ENCODE measurements at regions of chr19 and their contacts with region 1.

Region 1: GRCh38 chr19:4896372-4896771 is 6.3 kb downstream of the ARRDC5 start:
- DNase-seq: peak; percentile 44
- H3K4me3 ChIP-seq: no peak overlapping the region
- H3K27ac ChIP-seq: no peak overlapping the region
- H3K4me1 ChIP-seq: peaks cover 11% of the 10 kb centered on the region
- H3K27me3 ChIP-seq: no peaks in the 10 kb centered on the region
- CTCF ChIP-seq: no peak

Region 2: DNA sequence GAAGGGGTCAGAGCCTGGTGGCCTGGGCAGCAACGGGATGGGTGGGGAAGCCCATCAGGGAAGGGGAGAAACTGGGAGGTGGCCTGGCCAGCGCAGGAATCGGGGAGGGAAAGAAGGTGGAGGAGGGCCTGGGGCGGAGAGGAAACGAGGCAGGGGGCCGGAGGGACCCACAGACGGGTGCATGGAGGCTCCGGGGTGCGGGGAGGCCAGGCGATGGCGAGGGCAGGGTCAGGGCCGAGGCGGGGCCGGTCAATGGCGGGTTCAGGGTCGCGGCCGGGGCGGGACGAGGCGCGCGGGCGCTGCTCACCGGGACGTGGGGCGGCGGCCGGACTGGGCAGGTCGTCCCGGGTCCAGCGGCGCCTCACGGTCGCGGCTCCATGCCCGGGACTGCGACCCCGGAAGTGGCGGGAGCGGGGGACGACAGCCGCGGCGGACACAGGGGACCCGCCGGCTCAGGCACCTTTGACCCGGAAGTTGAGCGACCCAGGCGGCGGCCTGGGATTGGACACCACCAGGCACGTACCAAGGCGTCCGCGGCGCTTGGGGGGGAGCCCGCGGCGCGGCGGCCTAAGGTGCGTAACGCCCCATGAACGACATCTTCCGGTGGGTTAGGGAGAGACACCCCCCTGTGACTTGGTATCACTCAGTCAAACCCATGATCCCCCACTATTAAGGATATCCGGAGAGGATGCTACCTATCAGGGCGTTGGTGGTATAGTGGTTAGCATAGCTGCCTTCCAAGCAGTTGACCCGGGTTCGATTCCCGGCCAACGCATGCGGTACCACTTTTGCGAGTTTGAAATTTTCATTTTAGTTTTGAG is 172.8 kb before region 1 on chr19 and contains the start of gene DPP9:
- CTCF ChIA-PET with region 1: no interaction called
- dilution Hi-C with region 1: no loop called
- in situ Hi-C with region 1: no loop called
- intact Hi-C with region 1: no loop called
- DNase-seq: peak; percentile 98
- H3K4me3 ChIP-seq: peak within 1 kb of the TSS; percentile 73 to 96 (median 90)
- H3K27ac ChIP-seq: peak within 1 kb of the TSS; percentile 35
- H3K4me1 ChIP-seq: peaks cover 25% of the 10 kb centered on the region
- H3K27me3 ChIP-seq: no peaks in the 10 kb centered on the region
- CTCF ChIP-seq: peak in 1 of 2 donors; percentile 52
- total RNA-seq, gene DPP9: 156 to 242 TPM

Region 3: DNA sequence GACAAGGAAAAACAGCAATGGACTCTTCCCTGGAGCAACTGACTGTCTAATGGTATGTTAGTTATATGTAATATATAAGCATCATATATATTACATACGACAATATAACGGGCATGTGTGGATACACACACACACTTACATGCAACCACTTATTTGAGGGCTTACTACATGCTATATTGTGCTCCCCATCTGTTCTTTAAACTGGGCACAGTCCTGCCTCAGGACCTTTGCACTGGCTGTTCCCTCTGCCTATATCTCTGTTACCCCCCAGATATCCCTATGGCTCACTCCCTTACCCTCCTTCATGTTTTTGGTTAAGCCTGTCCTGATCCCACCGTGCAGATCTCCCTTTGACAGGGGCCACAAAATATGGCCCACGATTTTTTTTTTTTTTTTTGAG is 75.1 kb before region 1 on chr19:
- CTCF ChIA-PET with region 1: no interaction called
- dilution Hi-C with region 1: no loop called
- in situ Hi-C with region 1: no loop called
- intact Hi-C with region 1: no loop called
- DNase-seq: no peak
- H3K4me3 ChIP-seq: no peak overlapping the region
- H3K27ac ChIP-seq: no peak overlapping the region
- H3K4me1 ChIP-seq: no peaks in the 10 kb centered on the region
- H3K27me3 ChIP-seq: no peaks in the 10 kb centered on the region
- CTCF ChIP-seq: no peak

Region 4: GRCh38 chr19:4831304-4831978 is 64.9 kb before region 1 on chr19 and contains the start of gene TICAM1:
- CTCF ChIA-PET with region 1: no interaction called
- dilution Hi-C with region 1: loop called (anchors 5 kb)
- in situ Hi-C with region 1: no loop called
- intact Hi-C with region 1: no loop called
- DNase-seq: peak; percentile 91
- H3K4me3 ChIP-seq: peak within 1 kb of the TSS; percentile 68 to 99 (median 90)
- H3K27ac ChIP-seq: peak within 1 kb of the TSS; percentile 81
- H3K4me1 ChIP-seq: peaks cover 7% of the 10 kb centered on the region
- H3K27me3 ChIP-seq: no peaks in the 10 kb centered on the region
- CTCF ChIP-seq: peak in 1 of 2 donors; percentile 22
- total RNA-seq, gene TICAM1: 4.0 to 33.3 TPM